CD8-positive, alpha-beta T cell (primary cell): ENCODE measurements at regions of chr10 and their contacts with region 1.

Region 1: GRCh38 chr10:22573820-22574569 is 140.4 kb downstream of the PIP4K2A start:
- DNase-seq: peak in 7 of 9 experiments; percentile 2 to 82 (median 43)
- ATAC-seq: peak; percentile 64
- H3K4me3 ChIP-seq: no peak overlapping the region
- H3K4me3 Mint-ChIP-seq: peak overlapping the region; percentile 71
- H3K27ac ChIP-seq: peak overlapping the region in 1 of 2 experiments; percentile 63
- H3K27ac Mint-ChIP-seq: peak overlapping the region; percentile 94
- H3K4me1 ChIP-seq: peaks cover 35% of the 10 kb centered on the region
- H3K4me1 Mint-ChIP-seq: peaks cover 73% of the 10 kb centered on the region
- H3K27me3 ChIP-seq: no peaks in the 10 kb centered on the region
- H3K27me3 Mint-ChIP-seq: no peaks in the 10 kb centered on the region
- CTCF ChIP-seq: peak; percentile 79

Region 2: DNA sequence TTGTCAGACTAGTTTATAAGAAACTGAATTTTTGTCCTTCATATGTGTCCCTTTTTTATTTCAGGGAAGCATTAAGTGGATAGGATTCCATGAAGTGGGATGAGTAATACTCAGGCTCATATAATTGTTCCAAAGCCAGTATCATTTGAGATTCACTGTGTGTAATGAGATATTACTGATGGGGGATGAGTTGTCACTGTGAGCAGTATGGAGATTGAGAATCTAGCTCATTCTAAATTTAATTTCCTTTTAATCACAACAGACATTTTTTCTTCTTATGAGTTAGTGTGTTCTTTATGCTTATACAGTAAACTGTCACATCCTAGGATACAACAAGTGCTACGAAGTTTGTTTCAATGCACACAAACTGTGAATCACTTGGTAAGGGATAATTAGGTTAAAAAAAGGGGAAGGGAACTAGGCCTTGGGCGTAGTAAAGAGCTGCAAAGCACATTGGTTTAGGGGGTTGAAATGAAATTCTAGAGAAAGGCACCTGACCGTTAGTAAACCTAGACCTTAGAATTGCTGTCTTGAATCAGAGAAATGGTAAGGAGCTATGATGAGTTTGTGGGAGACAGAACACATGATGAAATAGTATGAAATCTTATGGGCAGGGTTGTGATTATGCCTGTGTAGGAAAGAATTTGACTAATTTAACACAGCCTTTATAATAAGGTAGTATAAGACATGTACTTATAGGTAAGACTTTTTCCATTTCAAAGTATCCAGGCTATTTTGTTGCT is 886.6 kb before region 1 on chr10:
- CTCF ChIA-PET with region 1: no interaction called
- POLR2A ChIA-PET with region 1: no interaction called
- intact Hi-C with region 1: no loop called
- DNase-seq: no peak
- ATAC-seq: no peak
- H3K4me3 ChIP-seq: no peak overlapping the region
- H3K4me3 Mint-ChIP-seq: no peak overlapping the region
- H3K27ac ChIP-seq: no peak overlapping the region
- H3K27ac Mint-ChIP-seq: no peak overlapping the region
- H3K4me1 ChIP-seq: no peaks in the 10 kb centered on the region
- H3K4me1 Mint-ChIP-seq: no peaks in the 10 kb centered on the region
- H3K27me3 ChIP-seq: no peaks in the 10 kb centered on the region
- H3K27me3 Mint-ChIP-seq: no peaks in the 10 kb centered on the region
- CTCF ChIP-seq: no peak

Region 3: GRCh38 chr10:22158426-22158825 is 415.6 kb before region 1 on chr10:
- CTCF ChIA-PET with region 1: no interaction called
- POLR2A ChIA-PET with region 1: no interaction called
- intact Hi-C with region 1: no loop called
- DNase-seq: no peak
- ATAC-seq: no peak
- H3K4me3 ChIP-seq: no peak overlapping the region
- H3K4me3 Mint-ChIP-seq: no peak overlapping the region
- H3K27ac ChIP-seq: no peak overlapping the region
- H3K27ac Mint-ChIP-seq: no peak overlapping the region
- H3K4me1 ChIP-seq: no peaks in the 10 kb centered on the region
- H3K4me1 Mint-ChIP-seq: peaks cover 8% of the 10 kb centered on the region
- H3K27me3 ChIP-seq: no peaks in the 10 kb centered on the region
- H3K27me3 Mint-ChIP-seq: no peaks in the 10 kb centered on the region
- CTCF ChIP-seq: no peak

Region 4: GRCh38 chr10:22251751-22252223 is 322.2 kb before region 1 on chr10:
- CTCF ChIA-PET with region 1: no interaction called
- POLR2A ChIA-PET with region 1: no interaction called
- intact Hi-C with region 1: loop called in 1 of 2 experiments (anchors 10 kb)
- DNase-seq: peak; percentile 25 to 82 (median 63)
- ATAC-seq: peak; percentile 59
- H3K4me3 ChIP-seq: peak overlapping the region; percentile 59 to 67
- H3K4me3 Mint-ChIP-seq: peak overlapping the region; percentile 94
- H3K27ac ChIP-seq: peak overlapping the region; percentile 77 to 85
- H3K27ac Mint-ChIP-seq: peak overlapping the region; percentile 98
- H3K4me1 ChIP-seq: peaks cover 6% of the 10 kb centered on the region
- H3K4me1 Mint-ChIP-seq: peaks cover 24% of the 10 kb centered on the region
- H3K27me3 ChIP-seq: peaks cover 9 to 10% of the 10 kb centered on the region in 2 experiments
- H3K27me3 Mint-ChIP-seq: peaks cover 30% of the 10 kb centered on the region
- CTCF ChIP-seq: no peak

Region 5: GRCh38 chr10:22277705-22278104 is 296.3 kb before region 1 on chr10:
- CTCF ChIA-PET with region 1: no interaction called
- POLR2A ChIA-PET with region 1: no interaction called
- intact Hi-C with region 1: no loop called
- DNase-seq: no peak
- ATAC-seq: no peak
- H3K4me3 ChIP-seq: no peak overlapping the region
- H3K4me3 Mint-ChIP-seq: no peak overlapping the region
- H3K27ac ChIP-seq: no peak overlapping the region
- H3K27ac Mint-ChIP-seq: no peak overlapping the region
- H3K4me1 ChIP-seq: no peaks in the 10 kb centered on the region
- H3K4me1 Mint-ChIP-seq: no peaks in the 10 kb centered on the region
- H3K27me3 ChIP-seq: peaks cover 0 to 3% of the 10 kb centered on the region in 2 experiments
- H3K27me3 Mint-ChIP-seq: peaks cover 9% of the 10 kb centered on the region
- CTCF ChIP-seq: no peak

Region 6: GRCh38 chr10:22550732-22551131 is 23.3 kb before region 1 on chr10:
- CTCF ChIA-PET with region 1: interaction called, 13 read pairs
- POLR2A ChIA-PET with region 1: interaction called, 3 read pairs
- intact Hi-C with region 1: loop called in 1 of 2 experiments (anchors 2 kb)
- DNase-seq: peak; percentile 37 to 83 (median 75)
- ATAC-seq: peak; percentile 79
- H3K4me3 ChIP-seq: no peak overlapping the region
- H3K4me3 Mint-ChIP-seq: no peak overlapping the region
- H3K27ac ChIP-seq: no peak overlapping the region
- H3K27ac Mint-ChIP-seq: peak overlapping the region; percentile 67
- H3K4me1 ChIP-seq: no peaks in the 10 kb centered on the region
- H3K4me1 Mint-ChIP-seq: peaks cover 30% of the 10 kb centered on the region
- H3K27me3 ChIP-seq: no peaks in the 10 kb centered on the region
- H3K27me3 Mint-ChIP-seq: no peaks in the 10 kb centered on the region
- CTCF ChIP-seq: peak; percentile 81

Region 7: GRCh38 chr10:22597138-22597537 is 23.1 kb after region 1 on chr10:
- CTCF ChIA-PET with region 1: interaction called, 82 read pairs
- POLR2A ChIA-PET with region 1: no interaction called
- intact Hi-C with region 1: no loop called
- DNase-seq: peak in 4 of 9 experiments; percentile 34 to 89 (median 60)
- ATAC-seq: peak; percentile 78
- H3K4me3 ChIP-seq: no peak overlapping the region
- H3K4me3 Mint-ChIP-seq: peak overlapping the region; percentile 47
- H3K27ac ChIP-seq: peak overlapping the region; percentile 14 to 90
- H3K27ac Mint-ChIP-seq: peak overlapping the region; percentile 88
- H3K4me1 ChIP-seq: peaks cover 91% of the 10 kb centered on the region
- H3K4me1 Mint-ChIP-seq: peaks cover 93% of the 10 kb centered on the region
- H3K27me3 ChIP-seq: no peaks in the 10 kb centered on the region
- H3K27me3 Mint-ChIP-seq: no peaks in the 10 kb centered on the region
- CTCF ChIP-seq: no peak

Region 8: DNA sequence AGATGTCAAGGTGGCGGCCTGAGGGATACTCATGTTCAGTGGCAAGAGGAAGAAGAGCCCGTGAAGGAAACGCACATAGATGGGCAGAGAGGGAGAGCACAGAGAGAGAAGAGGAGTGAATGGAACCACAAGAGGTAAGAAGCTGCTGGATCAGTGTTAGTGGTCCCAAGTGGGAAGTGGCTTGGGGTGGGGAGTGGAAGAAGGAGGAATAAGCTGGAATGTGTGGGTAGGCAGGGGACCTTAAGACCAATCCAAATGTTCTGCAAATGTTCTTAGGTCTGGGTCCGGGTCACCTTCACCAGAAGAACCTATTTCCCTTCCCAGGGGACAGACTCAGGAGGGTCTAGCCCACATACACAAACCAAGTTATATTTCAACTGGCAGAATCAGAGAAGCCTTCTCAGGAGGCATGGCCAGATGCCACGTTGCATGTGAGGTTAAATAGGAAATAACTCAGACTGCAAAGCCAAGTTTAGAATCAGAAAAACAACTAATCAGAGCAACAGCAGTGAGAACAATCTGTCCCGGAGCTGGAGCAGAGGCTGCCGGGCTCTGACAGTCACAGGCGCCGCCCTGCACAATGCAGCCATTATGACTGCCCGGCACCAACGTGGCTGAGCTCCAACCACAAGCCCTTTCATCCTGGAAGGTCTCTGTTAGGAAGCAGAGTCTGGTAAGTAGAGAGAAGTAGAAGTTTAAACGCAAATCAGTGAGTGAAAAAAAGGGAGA is 275.2 kb after region 1 on chr10:
- CTCF ChIA-PET with region 1: interaction called, 3 read pairs
- POLR2A ChIA-PET with region 1: no interaction called
- intact Hi-C with region 1: loop called in 1 of 2 experiments (anchors 5 kb)
- DNase-seq: peak in 1 of 9 experiments; percentile 21
- ATAC-seq: no peak
- H3K4me3 ChIP-seq: no peak overlapping the region
- H3K4me3 Mint-ChIP-seq: peak overlapping the region; percentile 56
- H3K27ac ChIP-seq: no peak overlapping the region
- H3K27ac Mint-ChIP-seq: peak overlapping the region; percentile 64
- H3K4me1 ChIP-seq: no peaks in the 10 kb centered on the region
- H3K4me1 Mint-ChIP-seq: peaks cover 14% of the 10 kb centered on the region
- H3K27me3 ChIP-seq: peaks cover 0 to 2% of the 10 kb centered on the region in 2 experiments
- H3K27me3 Mint-ChIP-seq: peaks cover 4% of the 10 kb centered on the region
- CTCF ChIP-seq: no peak

Region 9: GRCh38 chr10:23067939-23068775 is 494.2 kb after region 1 on chr10:
- CTCF ChIA-PET with region 1: no interaction called
- POLR2A ChIA-PET with region 1: no interaction called
- intact Hi-C with region 1: no loop called
- DNase-seq: peak; percentile 14 to 76 (median 68)
- ATAC-seq: peak; percentile 48
- H3K4me3 ChIP-seq: no peak overlapping the region
- H3K4me3 Mint-ChIP-seq: no peak overlapping the region
- H3K27ac ChIP-seq: no peak overlapping the region
- H3K27ac Mint-ChIP-seq: no peak overlapping the region
- H3K4me1 ChIP-seq: no peaks in the 10 kb centered on the region
- H3K4me1 Mint-ChIP-seq: peaks cover 1% of the 10 kb centered on the region
- H3K27me3 ChIP-seq: no peaks in the 10 kb centered on the region
- H3K27me3 Mint-ChIP-seq: peaks cover 17% of the 10 kb centered on the region
- CTCF ChIP-seq: peak; percentile 77